Naive thymus-derived CD4-positive, alpha-beta T cell (primary cell): ENCODE measurements at regions of chr11 and their contacts with region 1.

Region 1: DNA sequence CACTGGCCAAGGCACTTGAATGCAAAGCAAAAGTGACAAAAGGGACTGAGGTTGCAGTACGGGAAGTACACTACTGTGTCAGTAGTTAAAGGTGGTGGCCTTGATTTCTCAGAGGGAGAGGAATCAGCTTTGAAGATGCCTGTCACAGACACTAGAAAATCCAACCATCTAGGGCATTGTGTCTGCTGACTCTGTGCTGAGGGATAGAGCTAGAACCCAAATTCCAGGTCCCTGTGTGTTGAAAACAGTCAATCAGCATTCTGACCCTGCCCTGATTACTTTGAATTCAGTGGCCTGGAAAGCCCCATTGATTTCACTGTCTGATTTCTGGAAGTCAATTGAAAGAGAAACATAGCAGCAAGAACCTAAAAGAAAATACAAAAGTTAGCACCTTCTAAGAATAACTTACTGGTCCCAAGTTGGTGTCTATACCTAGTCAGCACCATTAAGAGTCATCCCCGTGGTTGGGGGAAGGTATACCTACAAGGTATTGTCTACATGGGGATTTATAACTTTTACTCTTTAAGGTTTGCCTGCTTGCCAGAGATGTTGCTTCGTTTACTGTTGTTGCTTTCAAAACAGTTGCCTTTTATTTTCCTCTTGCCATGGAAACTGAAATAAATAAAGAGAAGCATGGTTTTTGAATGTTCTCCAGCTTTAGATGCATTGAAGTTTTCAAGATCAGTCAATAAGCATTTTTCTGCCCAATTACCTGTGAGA is 97.3 kb downstream of the PDHX start:
- DNase-seq: peak in 8 of 9 donors; percentile 8 to 68 (median 40)
- ATAC-seq: peak; percentile 79
- H3K4me3 ChIP-seq: no peak overlapping the region
- H3K4me3 Mint-ChIP-seq: peak overlapping the region; percentile 12 to 80 (median 49)
- H3K27ac ChIP-seq: peak overlapping the region; percentile 49
- H3K27ac Mint-ChIP-seq: peak overlapping the region; percentile 66 to 95 (median 84)
- H3K4me1 ChIP-seq: peaks cover 18 to 25% of the 10 kb centered on the region in 2 donors
- H3K4me1 Mint-ChIP-seq: peaks cover 19 to 40% (median 27%) of the 10 kb centered on the region in 7 donors
- H3K27me3 ChIP-seq: no peaks in the 10 kb centered on the region
- H3K27me3 Mint-ChIP-seq: peaks cover 0 to 40% (median 0%) of the 10 kb centered on the region in 5 donors

Region 2: DNA sequence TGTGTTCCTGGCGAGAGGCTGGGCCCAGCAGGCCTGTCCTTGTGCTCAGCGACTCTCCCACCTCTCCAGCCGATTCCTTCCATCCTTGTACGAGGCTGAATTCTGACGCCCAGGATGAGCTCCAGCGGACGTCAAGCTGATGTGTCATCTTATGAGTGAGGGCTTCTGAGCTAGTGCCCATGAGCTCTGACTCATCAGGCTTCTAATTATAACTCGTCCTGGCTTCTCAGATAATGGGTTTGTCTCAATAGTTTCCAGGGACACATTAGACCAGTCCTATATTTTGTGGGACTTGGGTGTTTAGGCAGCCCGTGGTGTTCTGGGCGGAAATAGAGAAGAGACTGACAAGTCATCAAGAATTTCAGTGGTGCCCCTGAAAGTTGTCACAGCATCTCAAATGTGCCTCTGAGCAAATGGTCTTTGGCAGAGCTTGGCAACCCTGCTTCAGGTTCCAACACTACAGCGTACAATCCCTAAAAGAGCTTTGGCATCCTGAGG is 17.1 kb after region 1 on chr11:
- CTCF ChIA-PET with region 1: interaction called, 6 read pairs
- POLR2A ChIA-PET with region 1: interaction called, 4 read pairs
- intact Hi-C with region 1: loop called (anchors 1 to 2 kb)
- DNase-seq: no peak
- ATAC-seq: peak; percentile 79
- H3K4me3 ChIP-seq: no peak overlapping the region
- H3K4me3 Mint-ChIP-seq: peak overlapping the region in 6 of 10 donors; percentile 15 to 75 (median 52)
- H3K27ac ChIP-seq: no peak overlapping the region
- H3K27ac Mint-ChIP-seq: peak overlapping the region in 5 of 9 donors; percentile 38 to 87 (median 78)
- H3K4me1 ChIP-seq: peaks cover 10 to 14% of the 10 kb centered on the region in 2 donors
- H3K4me1 Mint-ChIP-seq: peaks cover 31 to 58% (median 49%) of the 10 kb centered on the region in 7 donors
- H3K27me3 ChIP-seq: no peaks in the 10 kb centered on the region
- H3K27me3 Mint-ChIP-seq: peaks cover 0 to 19% (median 0%) of the 10 kb centered on the region in 5 donors

Region 3: DNA sequence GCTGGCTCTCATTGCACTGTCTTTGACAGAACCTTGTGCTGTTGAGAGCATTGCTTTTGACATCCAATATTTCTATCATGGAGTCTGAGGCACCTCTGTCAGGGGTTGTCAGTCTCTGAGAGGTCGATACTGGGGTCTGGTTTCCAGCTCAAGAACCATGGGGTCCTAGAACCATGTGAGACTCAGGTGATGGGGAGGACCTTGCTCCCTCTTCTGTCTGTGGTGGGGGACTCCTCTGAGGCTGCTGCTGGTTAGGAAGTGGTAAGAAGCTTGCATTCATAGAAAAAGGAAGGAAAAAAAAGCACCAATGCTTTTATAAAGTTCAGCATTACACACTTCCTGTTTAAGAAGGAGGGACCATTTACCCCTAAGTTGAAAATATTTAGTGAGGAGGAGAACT is 33.5 kb after region 1 on chr11:
- CTCF ChIA-PET with region 1: interaction called, 3 read pairs
- POLR2A ChIA-PET with region 1: interaction called, 6 read pairs
- intact Hi-C with region 1: loop called (anchors 1 kb)
- DNase-seq: peak in 8 of 9 donors; percentile 47 to 88 (median 84)
- ATAC-seq: peak; percentile 79
- H3K4me3 ChIP-seq: no peak overlapping the region
- H3K4me3 Mint-ChIP-seq: peak overlapping the region; percentile 27 to 84 (median 71)
- H3K27ac ChIP-seq: peak overlapping the region; percentile 89
- H3K27ac Mint-ChIP-seq: peak overlapping the region; percentile 90 to 100 (median 99)
- H3K4me1 ChIP-seq: peaks cover 44 to 87% of the 10 kb centered on the region in 2 donors
- H3K4me1 Mint-ChIP-seq: peaks cover 66 to 99% (median 95%) of the 10 kb centered on the region in 7 donors
- H3K27me3 ChIP-seq: no peaks in the 10 kb centered on the region
- H3K27me3 Mint-ChIP-seq: peaks cover 0 to 7% (median 0%) of the 10 kb centered on the region in 5 donors

Region 4: GRCh38 chr11:35066783-35067423 is 53.2 kb after region 1 on chr11:
- CTCF ChIA-PET with region 1: no interaction called
- POLR2A ChIA-PET with region 1: no interaction called
- intact Hi-C with region 1: no loop called
- DNase-seq: peak in 1 of 9 donors; percentile 44
- ATAC-seq: peak; percentile 86
- H3K4me3 ChIP-seq: no peak overlapping the region
- H3K4me3 Mint-ChIP-seq: peak overlapping the region; percentile 1 to 69 (median 46)
- H3K27ac ChIP-seq: no peak overlapping the region
- H3K27ac Mint-ChIP-seq: peak overlapping the region; percentile 34 to 80 (median 60)
- H3K4me1 ChIP-seq: peaks cover 19 to 34% of the 10 kb centered on the region in 2 donors
- H3K4me1 Mint-ChIP-seq: peaks cover 16 to 54% (median 37%) of the 10 kb centered on the region in 7 donors
- H3K27me3 ChIP-seq: no peaks in the 10 kb centered on the region
- H3K27me3 Mint-ChIP-seq: peaks cover 0 to 7% (median 0%) of the 10 kb centered on the region in 5 donors

Region 5: DNA sequence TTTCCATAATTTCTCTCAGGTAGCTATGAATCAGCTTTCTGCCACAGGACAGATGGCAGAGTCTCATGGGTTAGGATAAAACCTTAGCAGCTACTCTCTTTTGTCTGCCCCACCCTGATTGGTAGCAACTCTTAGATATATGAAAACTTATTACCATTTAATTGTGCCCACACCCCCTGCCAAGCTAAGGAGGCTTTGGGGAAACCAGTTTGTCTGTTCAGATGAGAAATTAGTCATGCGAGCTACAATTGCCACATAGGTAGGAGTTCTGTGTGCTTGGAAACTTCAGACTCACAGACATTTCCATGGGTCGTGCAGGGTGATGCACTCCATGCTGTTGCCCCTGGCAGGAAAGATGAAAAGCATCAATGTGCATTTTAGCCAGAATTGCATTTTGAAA is 165.2 kb after region 1 on chr11:
- CTCF ChIA-PET with region 1: interaction called, 3 read pairs
- POLR2A ChIA-PET with region 1: no interaction called
- intact Hi-C with region 1: loop called in 1 of 2 experiments (anchors 1 kb)
- DNase-seq: no peak
- ATAC-seq: no peak
- H3K4me3 ChIP-seq: no peak overlapping the region
- H3K4me3 Mint-ChIP-seq: peak overlapping the region in 9 of 10 donors; percentile 44 to 77 (median 59)
- H3K27ac ChIP-seq: peak overlapping the region; percentile 65
- H3K27ac Mint-ChIP-seq: peak overlapping the region; percentile 85 to 100 (median 94)
- H3K4me1 ChIP-seq: peaks cover 84 to 89% of the 10 kb centered on the region in 2 donors
- H3K4me1 Mint-ChIP-seq: peaks cover 62 to 93% (median 91%) of the 10 kb centered on the region in 7 donors
- H3K27me3 ChIP-seq: no peaks in the 10 kb centered on the region
- H3K27me3 Mint-ChIP-seq: no peaks in the 10 kb centered on the region